Activated CD8-positive, alpha-beta T cell treated with anti-CD3 and anti-CD28 coated beads for 36 hours (primary cell): ENCODE measurements at regions of chr1 and their contacts with region 1.

Region 1: GRCh38 chr1:150186789-150187559 is 37.3 kb downstream of the PLEKHO1 start:
- DNase-seq: peak; percentile 34
- ATAC-seq: peak; percentile 79
- H3K4me3 Mint-ChIP-seq: peak overlapping the region; percentile 44
- H3K27ac Mint-ChIP-seq: peak overlapping the region; percentile 57
- H3K4me1 Mint-ChIP-seq: peaks cover 13% of the 10 kb centered on the region
- H3K27me3 Mint-ChIP-seq: no peaks in the 10 kb centered on the region
- CTCF ChIP-seq: peak; percentile 87

Region 2: DNA sequence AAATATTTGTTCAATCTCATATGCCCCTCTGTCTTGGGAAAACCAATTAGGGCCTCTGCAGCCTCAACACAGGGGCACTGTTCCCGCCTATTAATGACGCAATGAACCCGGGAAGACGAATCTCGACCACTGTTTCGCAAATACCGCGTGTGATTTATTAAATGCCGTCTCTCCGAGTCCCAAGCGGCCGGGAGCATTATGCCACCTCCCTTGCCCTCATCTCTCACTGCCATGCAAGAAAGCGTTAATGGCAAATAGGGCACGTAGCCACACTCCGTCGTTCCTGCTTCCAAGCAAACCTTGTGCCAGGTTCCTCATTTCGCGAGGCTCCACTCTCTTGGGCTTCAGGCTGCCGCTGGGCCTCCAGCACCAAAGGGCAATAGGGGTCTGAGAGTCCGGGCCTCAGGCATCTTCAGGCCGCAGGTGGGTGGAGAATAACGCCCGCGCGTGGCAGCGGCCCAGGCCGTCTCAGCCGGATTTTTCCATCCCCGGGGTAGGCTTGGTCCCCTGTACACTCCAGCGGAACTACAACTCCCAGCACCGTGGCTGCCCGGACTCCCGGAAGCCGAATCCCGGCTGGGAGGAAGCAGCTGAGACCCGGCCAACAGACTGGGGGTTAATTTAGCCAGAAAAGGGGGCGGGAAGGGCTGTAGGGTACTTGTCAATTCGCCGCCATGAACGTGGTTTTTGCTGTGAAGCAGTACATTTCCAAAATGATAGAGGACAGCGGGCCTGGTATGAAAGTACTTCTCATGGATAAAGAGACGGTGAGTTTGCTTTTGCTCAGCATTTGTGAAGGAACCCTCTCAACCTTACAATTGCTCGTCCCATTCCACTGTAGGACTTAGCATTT is 119.6 kb before region 1 on chr1 and contains the start of gene VPS45:
- CTCF ChIA-PET with region 1: interaction called, 56 read pairs
- POLR2A ChIA-PET with region 1: interaction called, 3 read pairs
- intact Hi-C with region 1: no loop called
- DNase-seq: peak; percentile 94
- ATAC-seq: peak; percentile 97
- H3K4me3 Mint-ChIP-seq: peak within 1 kb of the TSS; percentile 96
- H3K27ac Mint-ChIP-seq: peak within 1 kb of the TSS; percentile 98
- H3K4me1 Mint-ChIP-seq: peaks cover 27% of the 10 kb centered on the region
- H3K27me3 Mint-ChIP-seq: no peaks in the 10 kb centered on the region
- CTCF ChIP-seq: no peak
- total RNA-seq, gene VPS45: 19.4 to 22.8 TPM

Region 3: GRCh38 chr1:150072959-150073358 is 114.0 kb before region 1 on chr1:
- CTCF ChIA-PET with region 1: interaction called, 56 read pairs
- POLR2A ChIA-PET with region 1: interaction called, 3 read pairs
- intact Hi-C with region 1: no loop called
- DNase-seq: no peak
- ATAC-seq: peak; percentile 51
- H3K4me3 Mint-ChIP-seq: no peak overlapping the region
- H3K27ac Mint-ChIP-seq: no peak overlapping the region
- H3K4me1 Mint-ChIP-seq: peaks cover 27% of the 10 kb centered on the region
- H3K27me3 Mint-ChIP-seq: no peaks in the 10 kb centered on the region
- CTCF ChIP-seq: peak; percentile 62

Region 4: GRCh38 chr1:150168960-150169601 is 17.9 kb before region 1 on chr1:
- CTCF ChIA-PET with region 1: interaction called, 19 read pairs
- POLR2A ChIA-PET with region 1: interaction called, 3 read pairs
- intact Hi-C with region 1: no loop called
- DNase-seq: peak; percentile 82
- ATAC-seq: peak; percentile 79
- H3K4me3 Mint-ChIP-seq: no peak overlapping the region
- H3K27ac Mint-ChIP-seq: no peak overlapping the region
- H3K4me1 Mint-ChIP-seq: no peaks in the 10 kb centered on the region
- H3K27me3 Mint-ChIP-seq: no peaks in the 10 kb centered on the region
- CTCF ChIP-seq: peak; percentile 72

Region 5: DNA sequence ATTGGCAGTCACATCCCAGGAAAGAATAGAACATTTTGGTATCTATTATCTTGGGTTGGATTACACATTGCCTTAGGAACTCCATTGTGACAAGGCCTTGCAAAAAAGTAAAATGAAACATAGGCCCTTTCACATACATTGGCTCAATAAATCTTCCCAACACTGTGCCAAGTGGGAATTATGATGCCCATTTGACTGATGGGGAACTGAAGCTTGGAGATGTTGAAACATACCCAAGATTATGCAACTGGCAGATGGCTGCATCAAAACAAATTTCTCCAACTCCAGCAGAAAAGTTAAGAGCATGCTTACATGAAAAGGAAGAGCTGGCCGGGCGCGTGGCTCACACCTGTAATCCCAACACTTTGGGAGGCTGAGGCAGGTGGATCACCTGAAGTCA is 10.4 kb before region 1 on chr1:
- CTCF ChIA-PET with region 1: interaction called, 19 read pairs
- POLR2A ChIA-PET with region 1: no interaction called
- intact Hi-C with region 1: no loop called
- DNase-seq: no peak
- ATAC-seq: no peak
- H3K4me3 Mint-ChIP-seq: no peak overlapping the region
- H3K27ac Mint-ChIP-seq: no peak overlapping the region
- H3K4me1 Mint-ChIP-seq: no peaks in the 10 kb centered on the region
- H3K27me3 Mint-ChIP-seq: no peaks in the 10 kb centered on the region
- CTCF ChIP-seq: no peak

Region 6: DNA sequence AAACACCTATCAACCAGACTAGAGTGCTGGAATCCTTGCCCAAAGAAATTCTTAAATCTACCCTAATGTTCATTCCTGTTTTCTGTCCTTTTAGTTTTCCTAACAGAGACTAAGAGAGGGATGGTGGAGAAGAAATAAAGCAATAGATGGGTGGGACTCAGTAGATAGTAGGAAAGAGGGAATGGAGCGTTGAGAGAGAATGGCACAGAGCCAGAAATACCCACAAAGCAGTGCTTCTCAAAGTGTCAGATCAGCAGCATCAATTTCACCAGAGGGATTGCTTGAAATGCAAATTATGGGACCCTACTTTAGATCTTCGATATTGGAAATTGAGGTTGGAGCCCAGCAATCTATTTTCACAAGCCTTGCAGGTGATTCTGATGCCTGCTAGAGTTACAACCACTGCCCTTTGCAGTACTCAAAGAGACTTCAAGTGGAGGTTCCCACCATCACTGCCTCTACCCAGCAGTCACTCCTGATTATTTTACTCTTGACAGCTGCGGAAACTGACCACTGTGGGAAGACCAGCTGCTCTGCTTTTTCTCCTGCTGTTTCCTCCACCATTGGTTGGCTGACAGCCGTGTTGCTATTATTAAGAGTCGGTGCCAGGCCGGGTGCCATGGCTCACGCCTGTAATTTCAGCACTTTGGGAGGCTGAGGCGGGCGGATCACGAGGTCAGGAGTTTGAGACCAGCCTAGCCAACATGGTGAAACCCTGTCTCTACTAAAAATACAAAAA is 123.0 kb after region 1 on chr1:
- CTCF ChIA-PET with region 1: no interaction called
- POLR2A ChIA-PET with region 1: no interaction called
- intact Hi-C with region 1: no loop called
- DNase-seq: no peak
- ATAC-seq: no peak
- H3K4me3 Mint-ChIP-seq: no peak overlapping the region
- H3K27ac Mint-ChIP-seq: no peak overlapping the region
- H3K4me1 Mint-ChIP-seq: peaks cover 2% of the 10 kb centered on the region
- H3K27me3 Mint-ChIP-seq: no peaks in the 10 kb centered on the region
- CTCF ChIP-seq: no peak